Activated B cell treated with CpG ODN at 0.5 μM for 24 hours (primary cell): ENCODE measurements at regions of chr4 and their contacts with region 1.

Region 1: GRCh38 chr4:39840027-39840426 is 137.7 kb downstream of the PDS5A start:
- DNase-seq: no peak
- ATAC-seq: no peak
- H3K4me3 Mint-ChIP-seq: no peak overlapping the region
- H3K27ac Mint-ChIP-seq: no peak overlapping the region
- H3K4me1 Mint-ChIP-seq: no peaks in the 10 kb centered on the region
- H3K27me3 Mint-ChIP-seq: no peaks in the 10 kb centered on the region
- CTCF ChIP-seq: no peak

Region 2: DNA sequence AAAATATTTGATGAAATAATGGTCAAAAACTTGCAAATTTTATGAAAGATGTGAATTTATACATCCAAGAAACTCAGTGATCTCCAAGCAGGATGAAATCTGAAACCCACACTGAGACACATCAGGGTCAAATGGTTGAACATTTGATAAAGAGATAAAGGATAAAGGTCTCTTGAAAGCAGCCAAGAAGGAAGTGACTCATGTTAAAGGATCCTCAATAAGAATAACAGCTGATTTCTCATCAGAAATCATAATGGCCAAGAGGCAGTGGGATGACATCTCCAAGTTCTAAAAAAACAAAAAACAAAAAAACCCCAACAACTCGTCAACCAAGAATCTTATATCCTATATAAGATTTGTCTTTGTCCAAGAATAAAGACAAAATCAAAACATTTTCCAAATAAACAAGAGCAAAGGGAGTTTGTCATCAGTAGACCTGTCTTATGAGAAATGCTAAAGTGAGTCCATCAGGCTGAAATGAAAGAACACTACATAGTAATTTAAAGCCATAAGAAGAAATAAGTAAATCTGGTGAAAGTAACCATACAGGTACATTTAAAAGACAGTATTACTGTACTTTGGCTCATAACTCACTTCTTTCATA is 16.0 kb after region 1 on chr4:
- CTCF ChIA-PET with region 1: no interaction called
- POLR2A ChIA-PET with region 1: no interaction called
- intact Hi-C with region 1: loop called (anchors 2 kb)
- DNase-seq: no peak
- ATAC-seq: no peak
- H3K4me3 Mint-ChIP-seq: no peak overlapping the region
- H3K27ac Mint-ChIP-seq: no peak overlapping the region
- H3K4me1 Mint-ChIP-seq: no peaks in the 10 kb centered on the region
- H3K27me3 Mint-ChIP-seq: no peaks in the 10 kb centered on the region
- CTCF ChIP-seq: no peak

Region 3: DNA sequence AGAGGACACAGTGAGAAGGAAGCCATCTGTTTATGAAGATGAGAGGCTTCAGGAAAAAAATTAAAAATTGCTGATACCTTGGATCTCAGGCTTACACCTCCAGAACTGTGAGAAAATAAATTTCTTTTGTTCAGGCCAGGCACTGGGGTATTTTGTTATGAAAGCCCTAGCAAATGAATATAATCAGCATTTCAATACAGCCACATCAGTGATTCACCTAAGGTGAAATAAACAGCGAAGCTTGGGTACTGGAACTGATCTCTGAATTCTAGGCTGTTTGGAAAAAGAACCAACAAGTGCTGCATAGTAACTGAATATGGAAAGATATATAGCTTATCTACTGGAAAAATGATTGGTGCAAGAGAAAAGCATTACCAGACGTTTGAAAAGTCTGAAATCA is 49.2 kb after region 1 on chr4:
- CTCF ChIA-PET with region 1: no interaction called
- POLR2A ChIA-PET with region 1: no interaction called
- intact Hi-C with region 1: no loop called
- DNase-seq: no peak
- ATAC-seq: no peak
- H3K4me3 Mint-ChIP-seq: no peak overlapping the region
- H3K27ac Mint-ChIP-seq: no peak overlapping the region
- H3K4me1 Mint-ChIP-seq: peaks cover 17% of the 10 kb centered on the region
- H3K27me3 Mint-ChIP-seq: no peaks in the 10 kb centered on the region
- CTCF ChIP-seq: no peak